Calu3 (cell line): ENCODE measurements at regions of chr2 and their contacts with region 1.

Region 1: DNA sequence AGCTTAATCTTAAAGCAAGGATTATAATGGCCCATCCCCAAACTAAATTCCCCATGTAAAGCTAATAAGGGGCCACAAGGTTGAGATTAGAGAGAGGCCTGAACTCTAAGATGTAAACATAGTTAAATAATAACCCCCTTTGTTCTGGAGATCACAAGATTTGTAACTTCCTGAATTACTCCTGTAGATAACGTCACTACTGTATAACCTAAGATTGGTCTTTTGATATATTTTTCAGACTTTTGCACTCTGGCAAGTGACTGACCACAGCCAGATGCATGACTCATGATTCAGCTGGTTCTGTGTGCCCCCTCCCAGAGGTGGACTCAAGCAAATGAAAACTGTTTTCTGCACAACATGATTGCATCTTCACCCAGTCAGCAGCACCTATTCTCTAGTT is 686.0 kb upstream of the DDX18 start:
- DNase-seq: peak; percentile 68
- H3K4me3 Mint-ChIP-seq: peak overlapping the region; percentile 10
- H3K27ac Mint-ChIP-seq: peak overlapping the region; percentile 79
- H3K4me1 Mint-ChIP-seq: peaks cover 40% of the 10 kb centered on the region
- H3K27me3 Mint-ChIP-seq: no peaks in the 10 kb centered on the region
- CTCF ChIP-seq: no peak

Region 2: DNA sequence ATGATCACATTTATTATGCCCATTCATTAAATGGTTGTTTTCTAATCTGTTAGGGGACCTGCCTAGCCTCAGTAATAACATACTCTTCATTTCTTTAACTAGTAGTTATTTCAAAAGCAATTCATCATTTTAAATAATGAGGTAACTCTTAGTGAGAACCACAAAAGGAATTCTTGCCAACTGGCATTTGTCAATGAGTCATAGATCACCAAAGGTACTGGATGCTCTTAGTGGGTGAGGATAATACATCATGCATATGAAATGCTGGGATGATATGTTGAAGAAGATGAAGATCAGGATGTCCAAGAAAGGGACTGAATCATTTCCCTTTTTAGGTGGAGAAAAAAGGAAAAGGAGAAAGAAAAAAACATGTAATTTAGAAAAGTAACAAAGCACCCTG is 140.2 kb before region 1 on chr2:
- CTCF ChIA-PET with region 1: no interaction called
- intact Hi-C with region 1: no loop called
- DNase-seq: no peak
- H3K4me3 Mint-ChIP-seq: no peak overlapping the region
- H3K27ac Mint-ChIP-seq: no peak overlapping the region
- H3K4me1 Mint-ChIP-seq: no peaks in the 10 kb centered on the region
- H3K27me3 Mint-ChIP-seq: no peaks in the 10 kb centered on the region
- CTCF ChIP-seq: no peak

Region 3: GRCh38 chr2:117058366-117058765 is 70.1 kb before region 1 on chr2:
- CTCF ChIA-PET with region 1: no interaction called
- intact Hi-C with region 1: loop called (anchors 5 kb)
- DNase-seq: peak; percentile 7
- H3K4me3 Mint-ChIP-seq: no peak overlapping the region
- H3K27ac Mint-ChIP-seq: peak overlapping the region; percentile 34
- H3K4me1 Mint-ChIP-seq: peaks cover 26% of the 10 kb centered on the region
- H3K27me3 Mint-ChIP-seq: no peaks in the 10 kb centered on the region
- CTCF ChIP-seq: no peak

Region 4: GRCh38 chr2:117330641-117331040 is 202.2 kb after region 1 on chr2:
- CTCF ChIA-PET with region 1: no interaction called
- intact Hi-C with region 1: loop called (anchors 5 kb)
- DNase-seq: peak; percentile 18
- H3K4me3 Mint-ChIP-seq: peak overlapping the region; percentile 21
- H3K27ac Mint-ChIP-seq: peak overlapping the region; percentile 60
- H3K4me1 Mint-ChIP-seq: peaks cover 42% of the 10 kb centered on the region
- H3K27me3 Mint-ChIP-seq: no peaks in the 10 kb centered on the region
- CTCF ChIP-seq: no peak

Region 5: DNA sequence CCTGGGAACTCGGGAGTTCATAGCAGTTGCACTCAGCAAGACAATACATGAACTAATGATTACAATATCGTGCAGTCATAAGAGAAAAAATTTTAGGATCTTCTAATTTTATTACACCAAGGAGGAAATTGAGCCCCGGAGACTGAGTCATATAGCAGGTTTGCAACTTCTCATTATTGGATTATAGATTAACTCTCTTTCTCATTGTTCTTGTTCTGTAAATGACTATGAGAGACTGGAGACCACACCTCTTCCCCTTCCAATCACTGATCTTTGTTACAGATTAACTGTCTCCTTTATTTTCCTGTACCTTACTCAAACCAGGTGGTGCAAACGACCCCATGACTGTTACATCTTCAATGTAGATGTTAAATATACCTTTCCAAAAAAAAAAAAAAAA is 250.2 kb after region 1 on chr2:
- CTCF ChIA-PET with region 1: no interaction called
- intact Hi-C with region 1: loop called (anchors 5 kb)
- DNase-seq: peak; percentile 32
- H3K4me3 Mint-ChIP-seq: peak overlapping the region; percentile 37
- H3K27ac Mint-ChIP-seq: peak overlapping the region; percentile 72
- H3K4me1 Mint-ChIP-seq: peaks cover 35% of the 10 kb centered on the region
- H3K27me3 Mint-ChIP-seq: no peaks in the 10 kb centered on the region
- CTCF ChIP-seq: no peak

Region 6: DNA sequence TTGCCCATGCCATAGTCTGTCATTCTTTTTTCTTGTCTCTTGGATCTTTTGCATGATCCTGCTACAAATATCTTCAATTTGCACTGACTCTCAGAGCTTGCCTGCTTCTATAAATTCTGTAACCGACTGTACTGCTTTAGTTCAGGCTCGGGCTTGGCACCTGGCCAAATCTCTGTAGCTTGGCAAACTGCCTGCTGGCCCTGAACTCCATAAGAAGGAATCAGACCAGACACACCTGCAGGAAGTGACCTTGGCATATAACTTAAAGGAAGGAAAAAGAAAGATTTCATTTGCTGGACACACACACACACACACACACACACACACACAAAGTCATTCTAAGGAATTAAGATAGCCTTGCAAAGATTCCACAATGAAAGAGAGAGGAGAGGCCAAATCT is 394.8 kb after region 1 on chr2:
- CTCF ChIA-PET with region 1: no interaction called
- intact Hi-C with region 1: loop called (anchors 5 kb)
- DNase-seq: peak; percentile 89
- H3K4me3 Mint-ChIP-seq: no peak overlapping the region
- H3K27ac Mint-ChIP-seq: no peak overlapping the region
- H3K4me1 Mint-ChIP-seq: no peaks in the 10 kb centered on the region
- H3K27me3 Mint-ChIP-seq: no peaks in the 10 kb centered on the region
- CTCF ChIP-seq: no peak